Activated B cell treated with CpG ODN at 0.5 μM for 24 hours (primary cell): ENCODE measurements at regions of chr1 and their contacts with region 1.

Region 1: GRCh38 chr1:84506002-84506728 is at the starts of genes GNG5 and SPATA1:
- DNase-seq: peak; percentile 98
- ATAC-seq: peak; percentile 87
- H3K4me3 Mint-ChIP-seq: peak within 1 kb of the TSS; percentile 96
- H3K27ac Mint-ChIP-seq: peak within 1 kb of the TSS; percentile 98
- H3K4me1 Mint-ChIP-seq: peaks cover 37% of the 10 kb centered on the region
- H3K27me3 Mint-ChIP-seq: no peaks in the 10 kb centered on the region
- CTCF ChIP-seq: no peak
- total RNA-seq, gene GNG5: 57.0 and 63.5 TPM in 2 replicates
- total RNA-seq, gene SPATA1: 4.6 and 4.7 TPM in 2 replicates

Region 2: GRCh38 chr1:84077476-84078107 is 428.6 kb before region 1 on chr1:
- CTCF ChIA-PET with region 1: no interaction called
- POLR2A ChIA-PET with region 1: no interaction called
- intact Hi-C with region 1: loop called (anchors 2 kb)
- DNase-seq: peak; percentile 80
- ATAC-seq: peak; percentile 90
- H3K4me3 Mint-ChIP-seq: peak overlapping the region; percentile 91
- H3K27ac Mint-ChIP-seq: peak overlapping the region; percentile 75
- H3K4me1 Mint-ChIP-seq: peaks cover 11% of the 10 kb centered on the region
- H3K27me3 Mint-ChIP-seq: no peaks in the 10 kb centered on the region
- CTCF ChIP-seq: no peak

Region 3: DNA sequence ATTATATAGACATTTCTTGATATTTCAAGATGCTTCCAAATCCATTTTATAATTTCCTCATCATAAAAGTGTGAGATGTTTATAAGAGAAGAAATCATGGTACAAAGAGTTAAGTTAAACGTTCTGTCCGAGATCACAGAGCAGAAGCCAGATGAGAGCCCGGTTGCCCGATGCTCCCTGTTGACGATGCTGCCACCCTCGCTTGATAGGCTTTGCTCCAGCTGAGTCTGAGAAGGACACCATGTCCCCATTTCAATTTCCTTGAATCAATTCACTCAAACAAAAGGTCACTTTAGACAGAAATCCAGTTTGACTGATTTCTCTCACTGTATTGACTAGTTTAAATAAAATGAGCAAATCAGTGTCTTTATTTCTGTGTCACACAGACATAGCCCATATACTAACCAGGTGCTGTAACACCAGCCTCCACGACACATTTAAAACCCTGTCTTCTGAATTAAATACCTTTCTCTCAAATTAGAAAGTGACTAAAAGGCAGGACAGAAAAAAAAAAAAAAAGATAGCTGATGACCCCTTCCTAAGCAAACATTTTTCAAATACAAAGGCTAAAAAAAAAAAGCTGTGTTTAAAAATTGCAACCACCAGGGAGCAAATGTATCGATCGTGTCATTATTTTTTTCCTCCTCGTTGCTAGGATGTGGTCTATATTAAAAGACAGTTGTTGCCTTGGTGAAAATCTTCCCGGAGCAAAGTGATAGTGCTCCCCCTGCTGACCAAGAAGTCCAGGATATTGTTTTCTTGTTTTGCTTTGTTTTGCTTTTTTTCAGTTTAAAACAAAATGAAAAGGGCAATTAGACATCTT is 72.7 kb before region 1 on chr1:
- CTCF ChIA-PET with region 1: interaction called, 5 read pairs
- POLR2A ChIA-PET with region 1: interaction called, 22 read pairs
- intact Hi-C with region 1: no loop called
- DNase-seq: no peak
- ATAC-seq: peak; percentile 59
- H3K4me3 Mint-ChIP-seq: peak overlapping the region; percentile 65
- H3K27ac Mint-ChIP-seq: peak overlapping the region; percentile 15
- H3K4me1 Mint-ChIP-seq: peaks cover 9% of the 10 kb centered on the region
- H3K27me3 Mint-ChIP-seq: no peaks in the 10 kb centered on the region
- CTCF ChIP-seq: peak; percentile 48

Region 4: GRCh38 chr1:84478876-84479868 is 27.0 kb before region 1 on chr1 and contains the start of gene RPF1:
- CTCF ChIA-PET with region 1: interaction called, 5 read pairs
- POLR2A ChIA-PET with region 1: interaction called, 52 read pairs
- intact Hi-C with region 1: loop called (anchors 1 kb)
- DNase-seq: peak; percentile 64
- ATAC-seq: peak; percentile 96
- H3K4me3 Mint-ChIP-seq: peak within 1 kb of the TSS; percentile 97
- H3K27ac Mint-ChIP-seq: peak within 1 kb of the TSS; percentile 97
- H3K4me1 Mint-ChIP-seq: peaks cover 37% of the 10 kb centered on the region
- H3K27me3 Mint-ChIP-seq: peaks cover 21% of the 10 kb centered on the region
- CTCF ChIP-seq: no peak
- total RNA-seq, gene RPF1: 42.8 and 46.3 TPM in 2 replicates

Region 5: GRCh38 chr1:84541679-84542078 is 35.5 kb after region 1 on chr1:
- CTCF ChIA-PET with region 1: no interaction called
- POLR2A ChIA-PET with region 1: no interaction called
- intact Hi-C with region 1: no loop called
- DNase-seq: no peak
- ATAC-seq: no peak
- H3K4me3 Mint-ChIP-seq: no peak overlapping the region
- H3K27ac Mint-ChIP-seq: no peak overlapping the region
- H3K4me1 Mint-ChIP-seq: peaks cover 4% of the 10 kb centered on the region
- H3K27me3 Mint-ChIP-seq: no peaks in the 10 kb centered on the region
- CTCF ChIP-seq: no peak

Region 6: GRCh38 chr1:84598846-84599741 is 92.9 kb after region 1 on chr1:
- CTCF ChIA-PET with region 1: no interaction called
- POLR2A ChIA-PET with region 1: interaction called, 10 read pairs
- intact Hi-C with region 1: loop called (anchors 1 kb)
- DNase-seq: no peak
- ATAC-seq: peak; percentile 63
- H3K4me3 Mint-ChIP-seq: peak overlapping the region; percentile 53
- H3K27ac Mint-ChIP-seq: peak overlapping the region; percentile 88
- H3K4me1 Mint-ChIP-seq: peaks cover 17% of the 10 kb centered on the region
- H3K27me3 Mint-ChIP-seq: no peaks in the 10 kb centered on the region
- CTCF ChIP-seq: no peak

Region 7: DNA sequence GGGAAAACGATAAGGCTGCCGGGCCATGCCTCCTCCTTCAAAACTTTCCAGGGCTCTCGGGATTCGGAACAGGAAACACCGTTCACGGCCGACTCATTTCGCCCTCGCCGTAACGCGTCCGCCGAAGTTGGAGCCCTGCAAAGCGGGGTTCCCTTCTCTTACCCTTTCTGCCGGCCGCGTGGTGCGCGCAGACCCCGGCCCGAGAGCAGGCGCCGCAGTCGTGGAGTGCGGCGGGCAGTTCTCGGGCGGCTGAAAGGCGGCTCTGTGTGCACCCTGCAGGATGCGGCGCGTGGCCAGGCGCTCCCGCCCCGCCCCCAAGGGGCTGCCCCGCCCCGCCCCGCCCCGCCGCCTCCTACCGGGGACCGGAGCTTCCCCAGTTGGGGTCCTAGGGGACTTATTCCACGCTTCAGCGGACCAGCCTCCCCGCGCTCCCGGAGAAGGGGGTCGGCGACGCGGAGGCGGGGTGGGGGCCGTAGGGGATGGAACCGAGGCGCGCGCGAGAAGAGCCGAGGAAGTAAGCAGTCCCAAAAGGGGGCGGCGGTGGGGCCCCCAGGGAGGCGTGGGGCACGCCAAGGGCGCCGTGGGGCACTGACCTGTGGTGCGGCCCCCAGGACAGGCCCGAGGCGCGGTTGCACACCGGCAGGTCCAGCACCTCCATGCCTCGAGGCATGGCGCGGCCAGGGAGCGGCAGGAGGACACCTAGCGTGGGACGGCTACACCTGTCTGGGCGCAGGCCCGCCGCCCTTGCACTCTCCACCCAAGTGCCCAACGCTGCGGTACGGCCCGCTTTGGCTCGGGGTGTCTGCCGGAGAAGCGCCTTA is 490.9 kb after region 1 on chr1 and contains the start of gene MCOLN2:
- CTCF ChIA-PET with region 1: no interaction called
- POLR2A ChIA-PET with region 1: no interaction called
- intact Hi-C with region 1: loop called (anchors 10 kb)
- DNase-seq: peak; percentile 60
- ATAC-seq: peak; percentile 67
- H3K4me3 Mint-ChIP-seq: peak within 1 kb of the TSS; percentile 85
- H3K27ac Mint-ChIP-seq: peak within 1 kb of the TSS; percentile 87
- H3K4me1 Mint-ChIP-seq: peaks cover 63% of the 10 kb centered on the region
- H3K27me3 Mint-ChIP-seq: peaks cover 2% of the 10 kb centered on the region
- CTCF ChIP-seq: no peak
- total RNA-seq, gene MCOLN2: 60.1 and 80.2 TPM in 2 replicates